AG04449 (cell line): ENCODE measurements at regions of chr10 and their contacts with region 1.

Region 1: DNA sequence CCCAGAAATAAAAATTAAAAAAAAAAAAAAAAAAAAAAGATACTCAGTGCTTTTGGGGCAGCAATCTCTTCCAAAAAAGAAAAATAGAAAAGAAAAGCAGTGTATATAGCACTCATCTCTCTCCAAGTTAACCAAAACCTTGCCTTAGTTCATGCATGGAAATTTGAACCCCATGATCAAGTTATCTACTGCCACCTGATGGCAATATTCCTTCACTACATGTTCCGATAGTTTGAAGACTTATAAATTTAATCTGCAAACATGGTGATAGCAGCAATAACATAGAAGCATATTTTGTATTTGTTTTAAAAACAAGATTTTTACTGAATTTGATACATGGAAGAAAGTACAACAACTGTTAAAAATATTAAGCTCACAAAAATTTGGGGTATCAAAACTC is 48.6 kb upstream of the SLIT1 start:
- DNase-seq: no peak
- H3K4me3 ChIP-seq: no peak overlapping the region
- CTCF ChIP-seq: peak; percentile 45

Region 2: GRCh38 chr10:97259119-97259518 is 24.7 kb after region 1 on chr10:
- CTCF ChIA-PET with region 1: interaction called, 11 read pairs
- POLR2A ChIA-PET with region 1: no interaction called
- DNase-seq: no peak
- H3K4me3 ChIP-seq: no peak overlapping the region
- CTCF ChIP-seq: no peak

Region 3: GRCh38 chr10:97292097-97292862 is 57.9 kb after region 1 on chr10 and contains the start of gene ARHGAP19:
- CTCF ChIA-PET with region 1: no interaction called
- POLR2A ChIA-PET with region 1: no interaction called
- DNase-seq: peak; percentile 82
- H3K4me3 ChIP-seq: peak within 1 kb of the TSS; percentile 86
- CTCF ChIP-seq: peak; percentile 36